ENCODE measurements at regions of chr4 and their contacts with region 1.

Region 1: GRCh38 chr4:4859390-4859842 is at the start of gene MSX1:
- DNase-seq: no peak
- H3K4me3 ChIP-seq: peak within 1 kb of the TSS; percentile 70 to 80
- H3K27ac ChIP-seq: peak within 1 kb of the TSS; percentile 79
- H3K4me1 ChIP-seq: peaks cover 39% of the 10 kb centered on the region
- H3K27me3 ChIP-seq: peaks cover 5% of the 10 kb centered on the region
- CTCF ChIP-seq: no peak
- POLR2A ChIP-seq: peak; percentile 73 to 97
- total RNA-seq, gene MSX1: 31.4 TPM

Region 2: DNA sequence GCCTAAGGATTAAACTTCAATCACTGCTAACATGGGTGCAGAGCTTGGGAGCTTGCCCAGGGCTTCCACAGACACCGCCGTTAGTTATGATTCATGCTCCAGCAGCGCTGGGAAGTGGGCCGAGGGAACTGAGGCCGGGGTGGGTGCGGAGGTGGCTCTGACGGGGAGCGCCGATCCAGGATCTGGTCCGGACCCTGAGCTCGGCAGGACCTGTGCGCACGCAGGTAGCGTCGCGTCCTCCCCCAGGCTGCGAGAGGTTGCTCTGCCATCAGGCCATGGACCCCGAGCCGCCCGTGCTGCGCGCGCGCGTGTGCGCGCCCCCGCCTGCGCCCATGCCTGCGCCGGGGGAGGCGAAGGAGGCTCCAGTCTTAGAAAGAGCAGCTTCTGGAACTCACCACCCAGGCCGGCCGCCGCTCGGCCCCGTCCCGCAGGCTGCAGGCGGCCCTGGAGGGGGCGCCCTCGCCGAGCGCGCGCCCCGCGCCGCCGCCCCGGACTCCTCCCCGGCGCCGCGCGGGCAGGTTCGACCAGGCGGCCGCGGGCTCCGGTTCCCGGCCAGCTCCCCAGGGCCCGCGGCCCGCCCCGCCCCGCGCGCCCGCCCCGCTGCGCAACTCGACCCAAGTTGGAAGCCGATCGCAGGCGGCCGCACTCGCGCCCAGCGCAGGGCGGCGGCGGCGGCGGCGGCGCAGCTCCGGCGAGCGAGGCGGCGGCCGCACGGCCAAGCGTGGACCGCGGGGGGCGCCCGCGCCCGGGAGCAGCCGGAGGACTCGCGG is 1094.0 kb before region 1 on chr4:
- intact Hi-C with region 1: loop called (anchors 5 kb)
- DNase-seq: no peak
- H3K4me3 ChIP-seq: peak overlapping the region; percentile 40 to 55
- H3K27ac ChIP-seq: peak overlapping the region; percentile 74
- H3K4me1 ChIP-seq: peaks cover 11% of the 10 kb centered on the region
- H3K27me3 ChIP-seq: no peaks in the 10 kb centered on the region
- CTCF ChIP-seq: no peak
- POLR2A ChIP-seq: no peak

Region 3: DNA sequence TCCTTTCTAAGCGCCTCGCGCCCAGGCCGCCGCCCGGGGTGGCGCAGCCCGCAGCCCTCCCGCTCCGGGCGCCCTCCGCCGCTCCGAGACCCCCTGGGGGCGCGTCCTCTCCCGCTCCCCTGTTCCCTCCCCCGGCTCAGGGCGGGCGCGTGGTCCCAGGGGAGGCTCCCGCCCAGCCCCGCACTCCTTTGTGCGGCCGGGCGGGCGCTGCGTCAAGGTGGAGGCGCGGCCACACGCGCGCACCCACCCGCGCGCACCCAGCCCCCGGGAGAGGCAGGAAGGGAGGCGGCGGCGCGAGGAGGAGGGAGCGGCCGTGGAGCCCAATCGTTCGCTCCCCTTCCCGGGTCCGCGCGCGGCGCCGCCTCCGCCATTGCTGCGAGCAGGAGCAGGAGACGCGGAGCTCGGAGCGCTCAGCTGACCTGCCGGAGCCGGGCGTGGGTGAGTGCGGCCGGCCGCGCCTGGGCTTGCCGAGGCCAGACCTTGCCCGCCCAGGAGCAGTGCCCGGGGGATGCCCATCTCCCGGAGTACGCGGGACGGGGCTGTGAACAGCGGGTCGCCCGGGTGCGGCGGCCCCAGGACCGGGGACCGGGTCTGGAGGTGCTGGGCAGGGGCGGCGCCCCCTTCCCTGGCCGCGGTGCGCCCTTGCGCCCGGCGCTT is 472.6 kb before region 1 on chr4 and contains the start of gene NSG1:
- intact Hi-C with region 1: no loop called
- DNase-seq: no peak
- H3K4me3 ChIP-seq: peak within 1 kb of the TSS; percentile 52 to 60
- H3K27ac ChIP-seq: no peak within 1 kb of the TSS
- H3K4me1 ChIP-seq: peaks cover 32% of the 10 kb centered on the region
- H3K27me3 ChIP-seq: no peaks in the 10 kb centered on the region
- CTCF ChIP-seq: no peak
- POLR2A ChIP-seq: no peak
- total RNA-seq, gene NSG1: 32.9 TPM

Region 4: GRCh38 chr4:4492161-4492847 is 367.1 kb before region 1 on chr4:
- intact Hi-C with region 1: loop called (anchors 10 kb)
- DNase-seq: no peak
- H3K4me3 ChIP-seq: peak overlapping the region; percentile 2 to 9
- H3K27ac ChIP-seq: peak overlapping the region; percentile 76
- H3K4me1 ChIP-seq: peaks cover 9% of the 10 kb centered on the region
- H3K27me3 ChIP-seq: no peaks in the 10 kb centered on the region
- CTCF ChIP-seq: no peak
- POLR2A ChIP-seq: no peak

Region 5: DNA sequence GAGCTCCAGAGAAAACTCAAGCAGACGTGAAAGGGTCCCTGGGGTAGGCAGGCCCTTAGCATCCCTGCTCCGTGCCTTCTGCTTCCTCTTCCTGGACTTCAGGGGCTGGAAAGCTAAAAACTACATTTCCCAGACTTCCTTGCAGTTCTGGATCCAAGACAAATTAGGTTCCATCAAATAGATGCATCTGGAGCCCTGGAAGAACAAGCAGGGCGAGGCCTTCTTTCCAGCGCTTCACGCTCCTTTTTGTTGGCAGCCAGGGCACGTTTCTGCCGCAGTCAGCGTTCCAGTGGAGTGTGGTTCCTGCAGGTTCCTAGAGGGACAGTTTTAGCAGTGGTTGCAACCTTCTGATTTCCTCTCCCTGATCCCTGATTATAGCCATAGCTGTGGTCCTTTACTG is 53.5 kb before region 1 on chr4:
- intact Hi-C with region 1: no loop called
- DNase-seq: no peak
- H3K4me3 ChIP-seq: no peak overlapping the region
- H3K27ac ChIP-seq: no peak overlapping the region
- H3K4me1 ChIP-seq: no peaks in the 10 kb centered on the region
- H3K27me3 ChIP-seq: no peaks in the 10 kb centered on the region
- CTCF ChIP-seq: no peak
- POLR2A ChIP-seq: no peak

Region 6: GRCh38 chr4:4990857-4991540 is 131.6 kb after region 1 on chr4:
- intact Hi-C with region 1: loop called (anchors 5 kb)
- DNase-seq: peak in 1 of 2 donors; percentile 98
- H3K4me3 ChIP-seq: no peak overlapping the region
- H3K27ac ChIP-seq: peak overlapping the region; percentile 62
- H3K4me1 ChIP-seq: peaks cover 29% of the 10 kb centered on the region
- H3K27me3 ChIP-seq: no peaks in the 10 kb centered on the region
- CTCF ChIP-seq: no peak
- POLR2A ChIP-seq: no peak